Naive thymus-derived CD4-positive, alpha-beta T cell (primary cell): ENCODE measurements at regions of chr12 and their contacts with region 1.

Region 1: GRCh38 chr12:116708826-116709756 is 28.8 kb downstream of the SPRING1 start:
- DNase-seq: peak; percentile 23 to 63 (median 50)
- ATAC-seq: peak; percentile 88
- H3K4me3 ChIP-seq: no peak overlapping the region
- H3K4me3 Mint-ChIP-seq: peak overlapping the region in 9 of 10 donors; percentile 30 to 81 (median 63)
- H3K27ac ChIP-seq: no peak overlapping the region
- H3K27ac Mint-ChIP-seq: peak overlapping the region in 3 of 9 donors; percentile 35 to 68 (median 57)
- H3K4me1 ChIP-seq: peaks cover 0 to 9% of the 10 kb centered on the region in 2 donors
- H3K4me1 Mint-ChIP-seq: peaks cover 7 to 11% (median 9%) of the 10 kb centered on the region in 7 donors
- H3K27me3 ChIP-seq: no peaks in the 10 kb centered on the region
- H3K27me3 Mint-ChIP-seq: peaks cover 0 to 30% (median 6%) of the 10 kb centered on the region in 5 donors

Region 2: GRCh38 chr12:115998119-115998633 is 710.9 kb before region 1 on chr12:
- CTCF ChIA-PET with region 1: interaction called, 11 read pairs
- POLR2A ChIA-PET with region 1: no interaction called
- intact Hi-C with region 1: loop called (anchors 1 to 10 kb)
- DNase-seq: peak in 7 of 9 donors; percentile 13 to 49 (median 31)
- ATAC-seq: peak; percentile 72
- H3K4me3 ChIP-seq: no peak overlapping the region
- H3K4me3 Mint-ChIP-seq: no peak overlapping the region
- H3K27ac ChIP-seq: no peak overlapping the region
- H3K27ac Mint-ChIP-seq: peak overlapping the region in 5 of 9 donors; percentile 31 to 69 (median 46)
- H3K4me1 ChIP-seq: no peaks in the 10 kb centered on the region
- H3K4me1 Mint-ChIP-seq: peaks cover 0 to 26% (median 10%) of the 10 kb centered on the region in 7 donors
- H3K27me3 ChIP-seq: no peaks in the 10 kb centered on the region
- H3K27me3 Mint-ChIP-seq: no peaks in the 10 kb centered on the region

Region 3: DNA sequence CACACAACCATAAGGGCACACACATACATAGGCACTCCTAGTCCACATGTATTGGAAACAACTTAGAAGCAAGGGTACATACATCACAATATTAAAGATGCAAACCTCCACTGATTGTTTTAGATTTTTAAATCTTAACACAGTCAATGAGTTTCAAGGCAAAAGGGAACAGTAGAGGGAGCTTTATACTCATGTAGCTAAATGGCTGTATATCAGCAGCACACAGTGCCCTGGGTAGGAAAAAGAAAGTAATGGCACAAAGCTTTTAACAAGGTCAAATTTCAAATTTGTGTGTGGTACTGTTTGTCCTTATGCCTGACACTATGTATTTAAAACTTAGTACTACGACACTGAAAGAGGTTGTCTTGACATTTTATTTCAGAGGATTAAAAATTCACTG is 693.6 kb before region 1 on chr12:
- CTCF ChIA-PET with region 1: interaction called, 4 read pairs
- POLR2A ChIA-PET with region 1: no interaction called
- intact Hi-C with region 1: loop called in 1 of 2 experiments (anchors 1 kb)
- DNase-seq: peak in 4 of 9 donors; percentile 5 to 19 (median 14)
- ATAC-seq: peak; percentile 57
- H3K4me3 ChIP-seq: no peak overlapping the region
- H3K4me3 Mint-ChIP-seq: no peak overlapping the region
- H3K27ac ChIP-seq: no peak overlapping the region
- H3K27ac Mint-ChIP-seq: peak overlapping the region in 5 of 9 donors; percentile 8 to 68 (median 45)
- H3K4me1 ChIP-seq: no peaks in the 10 kb centered on the region
- H3K4me1 Mint-ChIP-seq: peaks cover 0 to 5% (median 4%) of the 10 kb centered on the region in 7 donors
- H3K27me3 ChIP-seq: no peaks in the 10 kb centered on the region
- H3K27me3 Mint-ChIP-seq: no peaks in the 10 kb centered on the region

Region 4: DNA sequence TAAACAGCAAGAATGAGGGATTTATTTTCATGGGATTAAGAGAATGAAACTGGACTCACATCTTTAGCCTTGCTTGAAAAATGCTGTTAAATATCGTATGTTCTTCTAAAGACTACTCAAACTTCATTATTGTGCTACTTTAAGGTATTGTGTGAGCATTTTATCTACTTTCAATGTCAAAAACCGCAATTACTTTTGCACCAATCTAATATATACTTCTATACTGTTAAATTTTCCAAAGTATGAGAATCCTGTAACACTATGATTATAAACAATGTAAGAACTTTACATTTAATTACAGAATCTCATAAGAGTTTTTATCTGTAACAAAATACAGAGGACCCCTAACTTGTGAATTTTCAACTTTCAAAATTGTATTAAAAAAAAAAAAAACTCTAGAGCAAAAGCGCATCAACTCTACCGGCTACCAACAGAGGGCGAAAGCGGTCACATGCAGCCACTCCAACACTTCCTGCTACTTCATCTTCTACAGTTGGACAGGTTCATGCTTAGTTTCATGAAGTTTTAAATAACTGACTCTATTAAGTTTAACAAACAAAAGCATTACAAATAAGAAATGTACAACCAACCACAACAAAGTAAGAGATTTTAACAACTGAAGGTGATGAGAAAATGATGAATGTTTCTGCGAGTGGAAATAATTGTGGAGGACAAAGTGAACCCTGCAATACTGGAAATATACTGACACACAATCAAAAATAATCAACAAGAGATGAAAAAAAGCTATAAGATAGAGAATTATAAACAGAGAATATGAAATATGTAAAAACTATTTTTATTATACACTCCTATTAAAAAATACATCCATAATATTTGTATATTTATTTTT is 642.5 kb before region 1 on chr12:
- CTCF ChIA-PET with region 1: no interaction called
- POLR2A ChIA-PET with region 1: no interaction called
- intact Hi-C with region 1: loop called in 1 of 2 experiments (anchors 1 kb)
- DNase-seq: peak; percentile 18 to 58 (median 49)
- ATAC-seq: peak; percentile 87
- H3K4me3 ChIP-seq: no peak overlapping the region
- H3K4me3 Mint-ChIP-seq: peak overlapping the region in 1 of 10 donors; percentile 14
- H3K27ac ChIP-seq: no peak overlapping the region
- H3K27ac Mint-ChIP-seq: peak overlapping the region in 4 of 9 donors; percentile 3 to 80 (median 10)
- H3K4me1 ChIP-seq: no peaks in the 10 kb centered on the region
- H3K4me1 Mint-ChIP-seq: peaks cover 22 to 72% (median 55%) of the 10 kb centered on the region in 7 donors
- H3K27me3 ChIP-seq: no peaks in the 10 kb centered on the region
- H3K27me3 Mint-ChIP-seq: no peaks in the 10 kb centered on the region

Region 5: GRCh38 chr12:116142936-116143898 is 565.9 kb before region 1 on chr12:
- CTCF ChIA-PET with region 1: interaction called, 10 read pairs
- POLR2A ChIA-PET with region 1: no interaction called
- intact Hi-C with region 1: loop called in 1 of 2 experiments (anchors 5 kb)
- DNase-seq: no peak
- ATAC-seq: peak; percentile 63
- H3K4me3 ChIP-seq: no peak overlapping the region
- H3K4me3 Mint-ChIP-seq: peak overlapping the region in 7 of 10 donors; percentile 15 to 72 (median 51)
- H3K27ac ChIP-seq: no peak overlapping the region
- H3K27ac Mint-ChIP-seq: peak overlapping the region in 5 of 9 donors; percentile 1 to 45 (median 7)
- H3K4me1 ChIP-seq: peaks cover 11 to 21% of the 10 kb centered on the region in 2 donors
- H3K4me1 Mint-ChIP-seq: peaks cover 42 to 61% (median 52%) of the 10 kb centered on the region in 7 donors
- H3K27me3 ChIP-seq: no peaks in the 10 kb centered on the region
- H3K27me3 Mint-ChIP-seq: no peaks in the 10 kb centered on the region

Region 6: DNA sequence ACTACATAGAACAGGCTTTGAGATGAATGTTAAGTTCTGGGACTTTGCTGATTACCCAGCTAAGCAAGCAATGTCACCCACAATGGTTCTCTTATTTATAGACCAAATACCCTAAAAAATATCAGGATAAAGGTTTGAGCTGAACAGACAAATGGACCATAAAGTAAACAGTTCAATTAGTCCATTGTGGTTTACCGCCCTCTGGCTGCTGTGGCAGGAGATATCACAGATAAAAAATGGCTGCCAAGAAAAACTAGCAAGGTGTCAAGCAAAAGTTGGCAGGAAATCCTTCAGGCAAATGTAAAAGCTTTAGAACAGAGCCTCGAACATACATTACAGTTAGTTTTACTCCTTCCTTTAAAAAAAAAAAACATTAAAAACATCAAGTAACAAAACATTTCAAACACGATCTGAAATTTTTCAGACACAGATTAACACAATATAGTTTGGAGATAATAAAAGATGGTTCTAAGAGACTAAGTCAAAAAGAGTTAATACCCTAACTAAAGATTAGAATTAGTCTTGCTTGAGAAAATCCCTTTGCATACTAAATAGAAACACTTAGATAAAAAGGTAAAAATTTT is 472.9 kb before region 1 on chr12:
- CTCF ChIA-PET with region 1: interaction called, 3 read pairs
- POLR2A ChIA-PET with region 1: no interaction called
- intact Hi-C with region 1: loop called in 1 of 2 experiments (anchors 2 kb)
- DNase-seq: peak in 8 of 9 donors; percentile 34 to 61 (median 46)
- ATAC-seq: peak; percentile 85
- H3K4me3 ChIP-seq: no peak overlapping the region
- H3K4me3 Mint-ChIP-seq: peak overlapping the region in 8 of 10 donors; percentile 16 to 71 (median 44)
- H3K27ac ChIP-seq: peak overlapping the region; percentile 37
- H3K27ac Mint-ChIP-seq: peak overlapping the region; percentile 38 to 89 (median 82)
- H3K4me1 ChIP-seq: peaks cover 0 to 18% of the 10 kb centered on the region in 2 donors
- H3K4me1 Mint-ChIP-seq: peaks cover 25 to 70% (median 57%) of the 10 kb centered on the region in 7 donors
- H3K27me3 ChIP-seq: no peaks in the 10 kb centered on the region
- H3K27me3 Mint-ChIP-seq: no peaks in the 10 kb centered on the region

Region 7: DNA sequence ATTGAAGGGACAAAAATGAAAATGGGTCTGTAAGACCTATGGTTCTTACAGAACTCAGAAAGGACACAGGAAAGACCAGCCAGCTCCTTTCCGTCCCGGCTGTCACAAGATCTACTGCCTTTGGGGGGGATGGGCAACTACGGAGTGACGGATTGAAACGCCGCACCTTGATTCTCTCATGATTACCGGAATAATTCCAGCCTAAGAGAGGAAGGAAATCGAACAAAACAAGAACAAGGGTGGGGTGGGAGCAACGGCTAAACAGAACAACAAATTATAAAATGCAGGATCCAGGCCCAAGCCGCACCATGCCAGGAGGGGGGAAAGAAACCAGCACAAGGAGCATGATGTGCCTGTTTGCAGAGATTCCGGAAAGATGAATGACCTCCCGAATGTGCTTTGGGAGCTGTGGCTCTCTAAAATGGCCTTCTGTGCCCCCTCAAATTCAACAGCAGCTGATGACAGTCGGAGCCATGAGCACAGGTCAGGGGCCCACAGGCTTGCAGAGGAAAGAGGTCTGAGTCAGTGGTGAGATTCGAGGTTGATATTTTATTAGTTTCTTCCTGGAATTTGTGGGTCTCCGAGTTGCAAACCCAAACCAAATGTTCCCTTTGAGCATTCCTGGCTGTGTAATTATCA is 43.3 kb before region 1 on chr12:
- CTCF ChIA-PET with region 1: no interaction called
- POLR2A ChIA-PET with region 1: no interaction called
- intact Hi-C with region 1: no loop called
- DNase-seq: no peak
- ATAC-seq: no peak
- H3K4me3 ChIP-seq: no peak overlapping the region
- H3K4me3 Mint-ChIP-seq: no peak overlapping the region
- H3K27ac ChIP-seq: no peak overlapping the region
- H3K27ac Mint-ChIP-seq: peak overlapping the region in 1 of 9 donors; percentile 26
- H3K4me1 ChIP-seq: no peaks in the 10 kb centered on the region
- H3K4me1 Mint-ChIP-seq: peaks cover 0 to under 1% (median 0%) of the 10 kb centered on the region in 7 donors
- H3K27me3 ChIP-seq: no peaks in the 10 kb centered on the region
- H3K27me3 Mint-ChIP-seq: peaks cover 0 to 6% (median 0%) of the 10 kb centered on the region in 5 donors

Region 8: GRCh38 chr12:116784238-116784612 is 75.1 kb after region 1 on chr12:
- CTCF ChIA-PET with region 1: no interaction called
- POLR2A ChIA-PET with region 1: no interaction called
- intact Hi-C with region 1: no loop called
- DNase-seq: no peak
- ATAC-seq: no peak
- H3K4me3 ChIP-seq: no peak overlapping the region
- H3K4me3 Mint-ChIP-seq: no peak overlapping the region
- H3K27ac ChIP-seq: no peak overlapping the region
- H3K27ac Mint-ChIP-seq: no peak overlapping the region
- H3K4me1 ChIP-seq: no peaks in the 10 kb centered on the region
- H3K4me1 Mint-ChIP-seq: peaks cover 0 to 2% (median 0%) of the 10 kb centered on the region in 7 donors
- H3K27me3 ChIP-seq: no peaks in the 10 kb centered on the region
- H3K27me3 Mint-ChIP-seq: no peaks in the 10 kb centered on the region

Region 9: DNA sequence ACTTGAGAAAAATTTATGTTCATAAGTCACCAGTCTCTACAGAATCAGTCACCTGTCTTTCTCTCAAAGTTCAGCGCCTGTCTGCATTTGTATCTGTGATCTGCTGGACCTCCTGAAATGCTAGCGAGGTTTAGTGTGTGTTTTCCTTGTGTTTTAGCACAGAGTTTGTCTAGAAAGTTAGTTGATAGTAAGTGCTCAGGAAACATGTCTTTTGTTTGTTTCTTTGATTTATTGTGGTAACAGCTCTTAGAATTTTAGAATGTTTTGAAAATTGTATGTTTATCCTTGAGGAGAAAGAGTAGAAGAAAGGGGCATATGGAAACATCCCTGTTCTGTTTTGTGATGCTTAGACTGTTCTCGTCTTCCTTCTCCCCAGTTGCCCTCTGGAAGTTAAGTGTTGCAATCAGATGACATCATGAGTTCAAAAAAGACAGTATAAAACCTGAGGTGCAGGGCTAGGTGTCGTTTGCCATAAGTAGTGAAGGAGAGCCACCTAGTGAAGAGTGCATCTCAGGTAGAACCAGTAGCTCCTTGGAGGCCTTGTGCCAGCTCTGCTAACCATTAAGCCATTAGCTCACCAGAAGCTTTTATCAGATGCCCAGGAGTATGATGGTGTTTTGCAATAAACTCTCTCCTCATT is 246.4 kb after region 1 on chr12:
- CTCF ChIA-PET with region 1: interaction called, 11 read pairs
- POLR2A ChIA-PET with region 1: no interaction called
- intact Hi-C with region 1: no loop called
- DNase-seq: peak in 7 of 9 donors; percentile 21 to 49 (median 34)
- ATAC-seq: peak; percentile 60
- H3K4me3 ChIP-seq: no peak overlapping the region
- H3K4me3 Mint-ChIP-seq: no peak overlapping the region
- H3K27ac ChIP-seq: no peak overlapping the region
- H3K27ac Mint-ChIP-seq: peak overlapping the region in 1 of 9 donors; percentile 51
- H3K4me1 ChIP-seq: peaks cover 0 to 4% of the 10 kb centered on the region in 2 donors
- H3K4me1 Mint-ChIP-seq: peaks cover 4 to 24% (median 8%) of the 10 kb centered on the region in 7 donors
- H3K27me3 ChIP-seq: no peaks in the 10 kb centered on the region
- H3K27me3 Mint-ChIP-seq: no peaks in the 10 kb centered on the region